K562 (cell line): ENCODE measurements at regions of chr6 and their contacts with region 1.

Region 1: DNA sequence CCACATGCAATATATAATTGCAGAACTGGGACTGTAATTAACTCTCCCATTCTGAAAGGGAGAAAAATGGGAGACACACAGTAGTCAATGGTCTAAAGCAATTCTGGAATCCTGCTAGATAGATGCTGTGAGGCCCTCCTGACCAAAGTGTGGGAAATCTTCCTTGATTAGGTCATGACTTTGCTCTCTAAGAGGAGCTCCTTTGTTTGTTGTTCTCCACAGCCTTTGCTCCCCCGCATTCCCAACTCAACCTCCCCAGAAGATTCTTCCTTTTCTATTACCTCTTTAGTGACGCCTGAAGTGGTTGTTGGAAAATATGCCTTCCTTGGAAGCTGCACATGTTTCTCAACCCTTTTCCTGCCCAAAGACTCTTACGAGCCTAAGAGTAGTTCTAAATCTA is 28.8 kb upstream of the LIN28B start:
- DNase-seq: no peak
- ATAC-seq: no peak
- H3K4me3 ChIP-seq: no peak overlapping the region
- H3K27ac ChIP-seq: no peak overlapping the region
- H3K4me1 ChIP-seq: no peaks in the 10 kb centered on the region
- H3K27me3 ChIP-seq: no peaks in the 10 kb centered on the region; a peak in 1 of 5 replicates
- CTCF ChIP-seq: no peak
- EP300 ChIP-seq: no peak
- POLR2A ChIP-seq: no peak
- RAD21 ChIP-seq: no peak

Region 2: DNA sequence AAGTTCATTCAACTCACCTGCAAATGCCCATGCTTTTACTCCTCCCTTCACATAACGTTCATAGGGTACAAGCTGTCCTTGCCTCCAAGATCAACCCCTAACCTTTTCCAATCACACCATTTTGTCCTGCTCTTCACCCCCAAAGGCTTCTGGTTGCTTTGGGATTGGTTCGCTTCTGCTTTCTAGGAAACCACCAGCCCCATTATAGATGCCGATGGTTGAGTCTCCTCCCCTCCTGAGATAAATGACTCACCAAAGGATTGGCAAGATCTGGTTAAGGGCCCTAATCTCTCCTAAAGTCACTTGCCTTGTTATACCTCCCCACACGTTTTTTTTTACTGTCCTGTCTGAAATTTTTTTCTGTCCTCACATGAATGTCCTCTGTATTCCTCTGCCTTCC is 379.8 kb before region 1 on chr6:
- CTCF ChIA-PET with region 1: no interaction called
- POLR2A ChIA-PET with region 1: no interaction called
- in situ Hi-C with region 1: no loop called
- intact Hi-C with region 1: no loop called
- DNase-seq: no peak
- ATAC-seq: no peak
- H3K4me3 ChIP-seq: no peak overlapping the region
- H3K27ac ChIP-seq: no peak overlapping the region
- H3K4me1 ChIP-seq: no peaks in the 10 kb centered on the region
- H3K27me3 ChIP-seq: no peaks in the 10 kb centered on the region
- CTCF ChIP-seq: no peak
- EP300 ChIP-seq: no peak
- POLR2A ChIP-seq: no peak
- RAD21 ChIP-seq: no peak

Region 3: GRCh38 chr6:105409734-105410133 is 481.6 kb after region 1 on chr6:
- CTCF ChIA-PET with region 1: no interaction called
- POLR2A ChIA-PET with region 1: no interaction called
- in situ Hi-C with region 1: loop called (anchors 10 kb)
- intact Hi-C with region 1: no loop called
- DNase-seq: no peak
- ATAC-seq: no peak
- H3K4me3 ChIP-seq: no peak overlapping the region
- H3K27ac ChIP-seq: no peak overlapping the region
- H3K4me1 ChIP-seq: no peaks in the 10 kb centered on the region
- H3K27me3 ChIP-seq: peaks cover 2 to 17% of the 10 kb centered on the region in 2 experiments; a peak in 1 of 5 replicates
- CTCF ChIP-seq: no peak
- EP300 ChIP-seq: no peak
- POLR2A ChIP-seq: no peak
- RAD21 ChIP-seq: no peak